Endothelial cell of umbilical vein (primary cell): ENCODE measurements at regions of chr7 and their contacts with region 1.

Region 1: DNA sequence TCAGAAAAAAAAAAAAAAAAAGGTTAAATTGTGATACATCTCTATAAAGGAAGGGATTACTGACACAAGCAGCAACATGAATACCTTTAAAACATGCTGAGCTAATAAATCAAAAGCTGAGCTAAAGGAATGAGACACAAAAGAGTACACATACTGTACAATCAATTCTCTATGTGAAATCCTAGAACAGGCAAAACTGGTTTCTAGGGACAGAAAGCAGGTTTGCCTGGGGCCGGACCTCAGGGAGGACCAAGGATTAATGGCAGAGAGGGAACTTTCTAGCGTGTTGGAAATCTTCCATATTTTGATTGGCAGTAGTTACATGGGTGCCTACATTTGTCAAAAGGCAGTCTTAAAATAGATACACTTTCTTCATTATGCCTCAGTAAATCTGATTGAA is 52.5 kb downstream of the KLRG2 start:
- DNase-seq: no peak
- H3K4me3 ChIP-seq: no peak overlapping the region
- H3K27ac ChIP-seq: no peak overlapping the region
- H3K4me1 ChIP-seq: no peaks in the 10 kb centered on the region
- H3K27me3 ChIP-seq: no peaks in the 10 kb centered on the region
- CTCF ChIP-seq: no peak
- POLR2A ChIP-seq: no peak

Region 2: GRCh38 chr7:139407555-139407954 is 23.5 kb before region 1 on chr7:
- CTCF ChIA-PET with region 1: interaction called, 11 read pairs
- POLR2A ChIA-PET with region 1: no interaction called
- dilution Hi-C with region 1: no loop called
- intact Hi-C with region 1: no loop called
- DNase-seq: no peak
- H3K4me3 ChIP-seq: no peak overlapping the region
- H3K27ac ChIP-seq: no peak overlapping the region
- H3K4me1 ChIP-seq: no peaks in the 10 kb centered on the region
- H3K27me3 ChIP-seq: no peaks in the 10 kb centered on the region
- CTCF ChIP-seq: no peak
- POLR2A ChIP-seq: no peak

Region 3: DNA sequence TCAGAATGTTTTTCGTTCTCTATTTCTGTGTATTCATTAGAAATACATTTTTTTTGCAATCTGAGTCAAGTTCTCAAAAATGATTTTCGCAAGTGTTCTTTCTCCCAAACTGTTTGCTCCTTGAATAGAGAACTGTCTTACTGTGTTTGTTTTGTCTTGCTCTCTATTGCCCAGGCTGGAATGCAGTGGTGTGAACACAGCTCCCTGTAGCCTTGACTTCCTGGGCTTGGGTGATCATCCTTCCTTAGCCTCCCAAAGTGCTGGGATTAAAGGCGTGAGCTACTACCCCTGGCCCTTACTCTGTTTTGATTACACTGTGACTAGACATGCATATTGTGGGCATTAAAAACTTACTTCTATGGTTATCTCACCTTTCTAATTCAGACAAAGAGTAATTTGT is 14.6 kb before region 1 on chr7:
- CTCF ChIA-PET with region 1: interaction called, 68 read pairs
- POLR2A ChIA-PET with region 1: no interaction called
- dilution Hi-C with region 1: no loop called
- intact Hi-C with region 1: no loop called
- DNase-seq: no peak
- H3K4me3 ChIP-seq: no peak overlapping the region
- H3K27ac ChIP-seq: no peak overlapping the region
- H3K4me1 ChIP-seq: no peaks in the 10 kb centered on the region
- H3K27me3 ChIP-seq: no peaks in the 10 kb centered on the region
- CTCF ChIP-seq: no peak
- POLR2A ChIP-seq: no peak

Region 4: DNA sequence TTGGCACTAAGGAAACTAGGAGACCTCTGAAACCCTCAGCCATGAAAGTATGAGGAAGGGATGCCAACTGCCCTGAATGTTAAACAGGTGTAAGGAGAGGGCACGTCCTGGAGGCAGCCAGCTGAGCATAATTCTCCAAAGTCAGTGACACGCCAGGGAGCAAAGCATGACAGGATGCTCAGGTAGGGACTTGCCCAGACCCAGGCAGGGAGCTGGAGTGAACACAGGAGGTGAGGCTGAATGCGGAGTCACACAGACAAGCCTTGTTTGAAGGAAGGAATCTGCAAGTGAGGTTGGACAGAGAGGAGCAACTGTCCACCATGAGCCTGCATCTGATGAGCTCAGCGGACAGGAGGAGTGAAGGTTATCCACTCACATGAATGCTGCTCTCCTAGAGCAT is 11.0 kb after region 1 on chr7:
- CTCF ChIA-PET with region 1: interaction called, 68 read pairs
- POLR2A ChIA-PET with region 1: no interaction called
- dilution Hi-C with region 1: no loop called
- intact Hi-C with region 1: no loop called
- DNase-seq: no peak
- H3K4me3 ChIP-seq: no peak overlapping the region
- H3K27ac ChIP-seq: no peak overlapping the region
- H3K4me1 ChIP-seq: no peaks in the 10 kb centered on the region
- H3K27me3 ChIP-seq: no peaks in the 10 kb centered on the region
- CTCF ChIP-seq: no peak
- POLR2A ChIP-seq: no peak

Region 5: GRCh38 chr7:139451638-139452037 is 20.6 kb after region 1 on chr7:
- CTCF ChIA-PET with region 1: interaction called, 23 read pairs
- POLR2A ChIA-PET with region 1: no interaction called
- dilution Hi-C with region 1: no loop called
- intact Hi-C with region 1: no loop called
- DNase-seq: peak; percentile 35
- H3K4me3 ChIP-seq: no peak overlapping the region
- H3K27ac ChIP-seq: no peak overlapping the region
- H3K4me1 ChIP-seq: no peaks in the 10 kb centered on the region
- H3K27me3 ChIP-seq: no peaks in the 10 kb centered on the region
- CTCF ChIP-seq: no peak
- POLR2A ChIP-seq: no peak

Region 6: GRCh38 chr7:139505563-139505962 is 74.6 kb after region 1 on chr7:
- CTCF ChIA-PET with region 1: interaction called, 19 read pairs
- POLR2A ChIA-PET with region 1: no interaction called
- dilution Hi-C with region 1: no loop called
- intact Hi-C with region 1: no loop called
- DNase-seq: no peak
- H3K4me3 ChIP-seq: no peak overlapping the region
- H3K27ac ChIP-seq: no peak overlapping the region
- H3K4me1 ChIP-seq: no peaks in the 10 kb centered on the region
- H3K27me3 ChIP-seq: no peaks in the 10 kb centered on the region
- CTCF ChIP-seq: peak; percentile 8 to 28
- POLR2A ChIP-seq: no peak